Activated CD4-positive, alpha-beta memory T cell treated with anti-CD3 and anti-CD28 coated beads for 36 hours (primary cell): ENCODE measurements at regions of chr19 and their contacts with region 1.

Region 1: DNA sequence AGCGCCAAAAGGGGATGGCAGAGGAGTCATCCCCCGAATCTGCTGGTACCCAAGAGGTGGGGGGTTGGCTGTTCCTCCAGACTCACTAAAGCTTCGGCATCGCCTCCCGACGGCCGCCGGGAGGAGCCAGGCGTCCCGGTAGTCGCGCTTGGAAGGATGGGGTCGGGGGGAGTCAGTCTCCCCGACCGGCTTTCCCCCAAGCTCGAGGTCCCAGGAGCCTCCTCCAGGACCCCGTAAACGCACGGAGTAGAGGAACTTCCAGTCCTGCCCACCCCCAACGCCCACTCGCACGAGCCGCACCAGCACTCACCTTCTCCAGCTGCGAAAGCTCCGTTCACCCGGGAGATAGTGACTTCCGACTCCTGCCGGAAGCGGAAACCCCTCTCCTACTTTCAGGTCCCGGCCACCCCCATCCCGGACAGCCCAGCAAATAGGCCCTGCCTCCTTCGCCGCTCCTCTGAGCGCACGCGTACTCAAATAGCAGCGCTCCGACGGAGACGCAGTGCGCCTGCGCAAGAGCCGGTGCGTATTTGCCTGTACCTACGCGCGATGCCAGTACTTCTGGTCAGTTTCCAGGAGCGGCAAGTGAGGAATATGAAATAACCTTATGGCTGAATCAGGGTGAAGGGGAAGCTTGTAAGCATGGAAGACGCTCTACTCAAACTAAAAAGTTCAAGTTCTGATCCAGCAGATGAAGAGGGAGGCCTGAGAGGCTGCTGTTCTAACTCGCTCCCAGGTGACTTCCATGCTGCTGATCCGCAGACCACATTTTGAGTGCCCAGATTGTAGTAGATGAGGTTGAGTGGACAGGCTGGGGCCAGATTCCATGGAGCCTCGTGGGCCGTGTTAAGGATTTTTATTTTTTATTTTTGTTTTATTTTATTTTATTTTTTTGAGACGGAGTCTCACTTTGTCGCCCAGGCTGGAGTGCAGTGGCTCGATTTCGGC is at the start of gene ELOF1:
- DNase-seq: peak; percentile 98
- H3K4me3 Mint-ChIP-seq: peak within 1 kb of the TSS; percentile 84
- H3K27ac Mint-ChIP-seq: peak within 1 kb of the TSS; percentile 87
- H3K4me1 Mint-ChIP-seq: peaks cover 43% of the 10 kb centered on the region
- H3K27me3 Mint-ChIP-seq: no peaks in the 10 kb centered on the region
- total RNA-seq, gene ELOF1: 48.5 to 49.1 TPM

Region 2: DNA sequence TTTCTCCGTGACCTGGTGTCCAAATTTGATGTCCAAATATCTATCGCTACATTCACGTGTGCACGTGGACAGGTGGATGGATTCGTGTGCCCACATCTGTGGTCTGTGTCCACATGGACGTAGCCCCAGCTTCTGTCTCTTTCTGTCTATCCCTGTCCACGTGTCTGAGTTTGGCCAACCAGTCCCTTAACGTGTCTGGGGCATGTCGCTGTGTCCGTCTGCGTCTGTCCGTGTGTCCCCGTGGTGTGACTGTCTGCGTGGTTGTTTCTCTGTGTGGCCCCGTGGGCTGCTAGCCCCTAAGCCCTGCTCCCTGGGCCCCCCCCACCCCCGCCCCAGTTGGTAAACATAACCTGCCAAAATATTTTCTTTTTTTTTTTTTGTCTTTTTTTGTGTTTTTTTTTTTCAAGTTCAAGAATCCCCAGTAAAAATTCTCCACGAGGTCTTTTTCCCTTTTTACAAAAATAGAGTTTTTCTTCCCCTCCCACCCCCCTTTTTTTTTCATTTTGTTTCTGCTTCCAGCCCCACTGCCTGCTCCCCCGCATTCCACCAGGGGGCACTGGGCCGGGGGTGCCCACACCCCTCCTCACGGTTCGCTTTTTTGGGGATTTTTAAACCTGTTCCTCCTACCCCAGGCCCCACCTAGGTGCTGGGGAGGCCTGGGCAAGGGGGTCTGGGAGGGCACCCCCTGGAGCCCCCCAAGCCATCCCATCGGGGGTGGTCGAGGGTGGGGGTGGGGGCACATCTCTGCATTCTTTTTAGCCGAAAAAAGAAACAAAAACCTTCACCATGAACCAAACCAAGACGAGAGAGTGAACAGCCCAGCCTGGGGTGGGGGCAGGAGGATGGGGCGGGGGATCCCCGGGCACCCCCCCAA is 105.5 kb before region 1 on chr19:
- CTCF ChIA-PET with region 1: no interaction called
- POLR2A ChIA-PET with region 1: no interaction called
- intact Hi-C with region 1: no loop called
- DNase-seq: peak; percentile 29
- H3K4me3 Mint-ChIP-seq: no peak overlapping the region
- H3K27ac Mint-ChIP-seq: no peak overlapping the region
- H3K4me1 Mint-ChIP-seq: no peaks in the 10 kb centered on the region
- H3K27me3 Mint-ChIP-seq: peaks cover 6% of the 10 kb centered on the region

Region 3: GRCh38 chr19:11505032-11505503 is 54.1 kb before region 1 on chr19:
- CTCF ChIA-PET with region 1: no interaction called
- POLR2A ChIA-PET with region 1: no interaction called
- intact Hi-C with region 1: loop called (anchors 1 kb)
- DNase-seq: peak; percentile 97
- H3K4me3 Mint-ChIP-seq: peak overlapping the region; percentile 83
- H3K27ac Mint-ChIP-seq: peak overlapping the region; percentile 58
- H3K4me1 Mint-ChIP-seq: peaks cover 14% of the 10 kb centered on the region
- H3K27me3 Mint-ChIP-seq: no peaks in the 10 kb centered on the region

Region 4: DNA sequence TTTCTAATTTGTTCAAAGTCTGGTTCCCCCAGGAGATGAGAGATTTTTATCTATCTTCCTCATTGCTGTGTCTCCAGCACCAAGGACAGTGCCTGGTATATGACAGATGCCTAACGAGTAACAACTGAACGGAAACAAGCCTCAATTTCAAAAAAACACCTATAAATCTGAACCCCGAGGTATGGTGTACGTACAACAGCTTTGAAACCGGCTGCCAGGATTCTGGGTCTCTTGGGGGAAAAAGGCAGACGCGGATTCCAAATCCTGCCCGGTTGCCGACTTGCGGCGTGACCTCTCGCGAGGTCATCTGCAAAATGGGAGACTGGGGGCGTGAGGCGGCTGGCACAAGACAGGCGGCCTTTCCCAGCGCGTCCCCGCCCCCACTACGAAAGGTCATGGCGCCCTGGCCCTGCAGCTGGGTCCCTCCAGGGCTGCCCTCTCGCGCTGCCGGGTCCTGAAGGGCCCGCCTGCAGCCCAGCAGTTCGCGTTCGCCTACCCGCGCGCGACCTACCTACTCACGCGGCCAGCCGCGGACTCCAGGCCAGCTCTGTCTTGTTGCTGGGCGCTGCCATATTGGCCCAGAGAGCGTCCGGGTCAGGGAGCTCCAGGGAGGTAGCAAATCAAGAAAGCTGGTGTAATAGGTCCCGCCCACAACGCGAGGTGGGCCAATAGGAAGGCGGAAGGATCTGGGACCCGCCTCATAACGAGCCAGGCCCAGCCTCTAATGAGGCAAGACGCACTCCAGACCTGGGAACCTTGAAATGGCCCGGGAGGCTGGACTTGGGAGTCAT is 30.4 kb before region 1 on chr19 and contains the start of gene ECSIT:
- CTCF ChIA-PET with region 1: interaction called, 14 read pairs
- POLR2A ChIA-PET with region 1: interaction called, 6 read pairs
- intact Hi-C with region 1: loop called (anchors 2 kb)
- DNase-seq: peak; percentile 97
- H3K4me3 Mint-ChIP-seq: peak within 1 kb of the TSS; percentile 93
- H3K27ac Mint-ChIP-seq: peak within 1 kb of the TSS; percentile 77
- H3K4me1 Mint-ChIP-seq: peaks cover 19% of the 10 kb centered on the region
- H3K27me3 Mint-ChIP-seq: no peaks in the 10 kb centered on the region
- total RNA-seq, gene ECSIT: 34.9 to 36.6 TPM

Region 5: GRCh38 chr19:11535792-11536595 is 23.2 kb before region 1 on chr19:
- CTCF ChIA-PET with region 1: interaction called, 15 read pairs
- POLR2A ChIA-PET with region 1: no interaction called
- intact Hi-C with region 1: no loop called
- DNase-seq: peak; percentile 91
- H3K4me3 Mint-ChIP-seq: peak overlapping the region; percentile 36
- H3K27ac Mint-ChIP-seq: peak overlapping the region; percentile 4
- H3K4me1 Mint-ChIP-seq: peaks cover 11% of the 10 kb centered on the region
- H3K27me3 Mint-ChIP-seq: peaks cover 12% of the 10 kb centered on the region

Region 6: DNA sequence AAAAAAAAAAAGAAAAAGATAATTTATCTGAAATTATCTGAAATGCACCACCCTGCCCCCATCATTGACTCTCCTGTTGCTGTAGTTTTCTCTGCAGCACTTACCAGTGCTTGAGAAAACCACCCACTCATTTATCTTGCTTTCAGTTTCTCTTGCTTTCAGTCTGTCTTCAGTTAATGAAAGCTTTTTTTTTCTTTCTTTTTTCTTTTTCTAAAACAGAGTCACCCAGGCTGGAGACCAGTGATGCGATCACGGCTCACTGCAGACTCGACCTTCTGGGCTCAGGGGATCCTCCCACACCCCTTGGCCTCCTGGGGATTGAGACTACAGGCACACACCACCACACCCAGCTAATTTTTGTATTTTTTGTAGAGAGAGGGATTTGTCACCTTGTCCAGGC is 22.6 kb after region 1 on chr19:
- CTCF ChIA-PET with region 1: interaction called, 28 read pairs
- POLR2A ChIA-PET with region 1: interaction called, 3 read pairs
- intact Hi-C with region 1: loop called (anchors 1 kb)
- DNase-seq: peak; percentile 78
- H3K4me3 Mint-ChIP-seq: peak overlapping the region; percentile 47
- H3K27ac Mint-ChIP-seq: peak overlapping the region; percentile 93
- H3K4me1 Mint-ChIP-seq: peaks cover 25% of the 10 kb centered on the region
- H3K27me3 Mint-ChIP-seq: no peaks in the 10 kb centered on the region

Region 7: GRCh38 chr19:11587302-11587974 is 28.3 kb after region 1 on chr19:
- CTCF ChIA-PET with region 1: interaction called, 40 read pairs
- POLR2A ChIA-PET with region 1: no interaction called
- intact Hi-C with region 1: loop called (anchors 1 kb)
- DNase-seq: peak; percentile 88
- H3K4me3 Mint-ChIP-seq: no peak overlapping the region
- H3K27ac Mint-ChIP-seq: no peak overlapping the region
- H3K4me1 Mint-ChIP-seq: peaks cover 3% of the 10 kb centered on the region
- H3K27me3 Mint-ChIP-seq: no peaks in the 10 kb centered on the region

Region 8: DNA sequence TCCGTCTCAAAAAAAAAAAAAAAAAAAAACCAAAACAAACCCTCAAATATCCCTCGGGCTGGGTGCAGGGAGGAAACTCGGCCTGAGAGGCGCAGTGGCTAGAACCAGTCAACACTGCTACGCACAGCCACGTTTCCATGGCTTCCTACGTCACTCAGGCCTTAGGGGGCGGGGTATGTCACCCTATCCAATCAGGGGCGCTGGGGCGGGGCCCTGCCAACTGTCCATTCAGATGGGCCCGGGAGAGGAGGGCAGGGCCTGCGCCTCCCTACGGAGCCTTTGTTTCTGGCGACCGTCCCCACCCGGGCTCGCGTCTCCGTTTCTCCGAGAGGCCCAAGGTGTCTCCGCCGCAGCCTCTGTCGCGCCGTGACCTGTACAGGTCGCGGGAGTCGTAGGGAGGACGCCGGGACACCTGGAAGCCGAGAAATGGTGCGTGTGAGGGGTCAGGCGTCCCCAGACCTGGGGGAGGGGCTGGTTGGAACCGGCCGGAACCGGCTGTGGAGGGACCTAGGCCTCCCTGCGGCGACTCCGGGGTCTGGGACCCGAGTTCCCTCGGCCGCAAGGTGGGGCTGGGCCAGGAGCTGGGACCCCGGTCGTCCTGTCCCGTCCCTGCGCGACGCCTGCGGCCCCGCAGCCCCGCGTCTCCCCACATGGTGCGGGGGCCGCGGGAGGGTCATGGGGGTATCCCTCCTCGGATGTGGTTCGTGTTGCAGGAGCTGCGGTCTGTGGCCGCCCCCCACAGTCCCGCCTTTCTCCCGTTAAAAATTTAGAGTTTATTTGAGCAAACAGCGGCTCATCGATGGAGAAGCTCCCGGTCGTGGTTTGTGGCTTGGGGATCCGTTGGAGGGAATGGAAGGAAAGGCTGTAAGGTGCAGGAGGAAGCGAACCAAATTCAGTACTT is 38.3 kb after region 1 on chr19 and contains the start of gene ZNF627:
- CTCF ChIA-PET with region 1: interaction called, 40 read pairs
- POLR2A ChIA-PET with region 1: interaction called, 3 read pairs
- intact Hi-C with region 1: loop called (anchors 2 kb)
- DNase-seq: peak; percentile 99
- H3K4me3 Mint-ChIP-seq: peak within 1 kb of the TSS; percentile 90
- H3K27ac Mint-ChIP-seq: peak within 1 kb of the TSS; percentile 81
- H3K4me1 Mint-ChIP-seq: peaks cover 29% of the 10 kb centered on the region
- H3K27me3 Mint-ChIP-seq: no peaks in the 10 kb centered on the region
- total RNA-seq, gene ZNF627: 6.6 to 7.0 TPM